Adrenal gland (tissue), 19 donors: ENCODE measurements at regions of chr12 and their contacts with region 1.

Region 1: GRCh38 chr12:22544038-22544979 is at the start of gene C2CD5:
- DNase-seq: peak; percentile 95 to 99 (median 98)
- H3K4me3 ChIP-seq: peak within 1 kb of the TSS; percentile 31 to 86 (median 78)
- H3K27ac ChIP-seq: peak within 1 kb of the TSS; percentile 79 to 97 (median 91)
- H3K4me1 ChIP-seq: peaks cover 4 to 28% of the 10 kb centered on the region in 2 donors
- H3K27me3 ChIP-seq: no peaks in the 10 kb centered on the region
- CTCF ChIP-seq: peak in 3 of 6 experiments; percentile 25 to 52 (median 36)
- POLR2A ChIP-seq: peak; percentile 85 to 87
- total RNA-seq, gene C2CD5: 23.5 to 38.9 (median 29.1) TPM

Region 2: DNA sequence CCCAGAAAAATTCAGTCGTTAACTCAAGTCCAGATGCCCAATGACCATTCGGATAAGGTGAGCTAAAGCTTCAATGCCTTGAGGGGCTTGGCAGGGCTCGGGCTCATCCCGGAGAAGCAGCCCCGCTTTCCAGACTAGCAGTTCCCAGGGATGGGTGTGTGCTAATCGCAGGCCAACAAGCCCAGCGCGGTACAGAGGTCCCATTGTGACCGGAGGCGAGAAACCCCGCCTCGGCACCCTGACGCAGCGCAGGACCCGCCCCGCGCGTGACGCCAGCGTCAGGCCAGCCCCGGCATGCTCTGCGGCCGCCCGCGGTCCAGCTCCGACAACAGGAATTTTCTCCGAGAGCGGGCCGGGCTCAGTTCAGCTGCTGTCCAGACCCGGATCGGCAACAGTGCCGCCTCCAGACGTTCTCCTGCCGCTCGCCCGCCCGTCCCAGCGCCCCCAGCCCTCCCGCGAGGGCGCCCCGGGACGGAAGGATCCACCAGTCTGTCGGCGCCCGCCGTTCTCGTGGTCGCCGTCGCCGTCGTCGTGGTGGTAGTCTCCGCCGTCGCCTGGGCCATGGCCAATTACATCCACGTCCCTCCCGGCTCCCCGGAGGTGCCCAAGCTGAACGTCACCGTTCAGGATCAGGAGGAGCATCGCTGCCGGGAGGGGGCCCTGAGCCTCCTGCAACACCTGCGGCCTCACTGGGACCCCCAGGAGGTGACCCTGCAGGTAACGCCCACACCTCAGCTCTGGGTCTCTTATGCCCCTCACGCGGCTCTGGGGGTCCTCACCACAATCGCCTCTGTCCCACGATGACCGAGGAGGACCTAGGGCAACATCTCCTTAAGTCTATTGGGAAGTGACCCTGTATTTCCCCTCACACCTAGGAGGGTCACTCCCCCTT is 80.8 kb after region 1 on chr12 and contains the start of gene ETNK1:
- intact Hi-C with region 1: loop called (anchors 5 kb)
- DNase-seq: peak; percentile 91 to 97 (median 95)
- H3K4me3 ChIP-seq: peak within 1 kb of the TSS; percentile 63 to 93 (median 91)
- H3K27ac ChIP-seq: peak within 1 kb of the TSS; percentile 85 to 99 (median 96)
- H3K4me1 ChIP-seq: peaks cover 8 to 38% of the 10 kb centered on the region in 2 donors
- H3K27me3 ChIP-seq: no peaks in the 10 kb centered on the region
- CTCF ChIP-seq: no peak
- POLR2A ChIP-seq: peak; percentile 96 to 99
- total RNA-seq, gene ETNK1: 32.4 to 79.2 (median 67.0) TPM